K562 (cell line): ENCODE measurements at regions of chr11 and their contacts with region 1.

Region 1: DNA sequence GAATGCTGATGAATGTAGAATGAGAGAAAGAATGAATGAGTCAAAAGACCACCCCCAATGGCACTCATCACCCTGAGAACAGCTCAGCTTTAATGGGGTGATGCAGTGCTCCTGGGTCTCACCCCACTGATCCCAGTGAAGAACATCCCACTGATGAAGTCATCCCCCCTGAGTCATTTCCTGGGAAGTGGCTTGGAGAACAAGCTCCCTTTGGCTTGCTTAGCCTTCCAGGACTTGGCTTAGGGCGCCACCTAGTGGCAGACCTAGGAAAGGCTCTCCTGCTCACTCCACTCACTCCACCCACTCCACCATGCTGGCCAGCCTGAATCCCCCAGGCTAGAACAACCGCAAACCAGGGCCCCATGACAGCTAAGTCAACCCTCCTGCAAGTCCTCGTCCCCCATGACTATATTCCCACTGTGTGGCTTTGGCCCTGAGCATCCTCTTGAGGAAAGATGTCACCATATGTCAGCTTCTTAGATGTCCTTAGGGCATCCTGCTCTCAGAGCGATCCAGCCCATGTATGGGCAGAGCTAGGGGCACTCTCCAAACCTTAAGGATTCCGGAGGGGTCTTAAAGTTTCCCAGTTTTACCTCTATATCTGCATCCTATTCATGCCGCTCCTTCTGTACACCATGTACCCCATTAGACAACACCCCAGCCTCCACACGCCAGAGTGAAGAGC is 17.8 kb upstream of the TMPRSS13 start:
- DNase-seq: peak; percentile 83 to 92 (median 90)
- ATAC-seq: peak; percentile 94
- H3K4me3 ChIP-seq: no peak overlapping the region
- H3K27ac ChIP-seq: no peak overlapping the region
- H3K4me1 ChIP-seq: peaks cover 20 to 41% of the 10 kb centered on the region in 2 experiments
- H3K27me3 ChIP-seq: no peaks in the 10 kb centered on the region
- CTCF ChIP-seq: peak; percentile 90 to 97 (median 96)
- EP300 ChIP-seq: peak; percentile 42; the same call in 1 of the 2 replicates
- POLR2A ChIP-seq: no peak
- RAD21 ChIP-seq: peak; percentile 93 to 96

Region 2: DNA sequence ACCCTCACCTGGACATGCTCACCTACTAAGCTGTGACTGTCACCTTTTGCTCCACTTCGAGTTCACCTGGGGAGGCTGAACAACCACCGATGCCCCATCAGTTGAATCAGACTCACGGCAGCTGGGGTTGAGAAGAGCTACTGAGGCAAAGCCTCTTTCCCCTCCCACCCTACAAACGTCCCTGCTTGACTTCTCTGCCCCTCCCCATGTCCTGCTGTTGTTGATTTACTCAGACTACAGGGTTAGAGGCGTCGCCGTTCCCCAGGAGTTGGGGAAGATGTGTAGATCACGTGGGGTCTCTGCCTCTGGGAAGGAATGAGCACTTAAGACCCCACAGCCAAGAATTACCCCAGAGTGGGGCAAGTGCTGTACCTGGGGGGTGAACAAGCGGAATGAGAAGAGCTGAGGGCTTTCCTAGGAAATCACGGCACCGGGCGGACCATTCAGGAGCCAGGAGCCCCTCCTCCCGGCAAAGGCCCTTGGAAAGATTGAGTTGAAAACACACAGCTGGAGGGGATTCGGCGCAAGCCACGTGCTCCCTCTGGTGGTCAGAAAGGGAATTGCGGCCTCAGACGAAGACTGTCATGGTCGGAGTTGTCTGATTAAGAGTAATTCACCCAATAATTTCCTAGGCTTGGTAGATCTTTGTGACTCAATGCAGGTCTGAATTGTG is 129.5 kb before region 1 on chr11:
- CTCF ChIA-PET with region 1: interaction called, 37 read pairs
- POLR2A ChIA-PET with region 1: interaction called, 4 read pairs
- in situ Hi-C with region 1: loop called (anchors 5 kb)
- intact Hi-C with region 1: no loop called
- DNase-seq: peak; percentile 65 to 78 (median 76)
- ATAC-seq: peak; percentile 84
- H3K4me3 ChIP-seq: no peak overlapping the region
- H3K27ac ChIP-seq: no peak overlapping the region
- H3K4me1 ChIP-seq: peaks cover 0 to 30% of the 10 kb centered on the region in 2 experiments; a peak in 3 of 5 replicates
- H3K27me3 ChIP-seq: peaks cover 3 to 13% of the 10 kb centered on the region in 2 experiments; a peak in 3 of 5 replicates
- CTCF ChIP-seq: peak; percentile 86 to 99 (median 97)
- EP300 ChIP-seq: no peak
- POLR2A ChIP-seq: no peak
- RAD21 ChIP-seq: peak; percentile 75 to 88

Region 3: GRCh38 chr11:117891362-117891761 is 55.6 kb before region 1 on chr11:
- CTCF ChIA-PET with region 1: no interaction called
- POLR2A ChIA-PET with region 1: no interaction called
- in situ Hi-C with region 1: no loop called
- intact Hi-C with region 1: no loop called
- DNase-seq: no peak
- ATAC-seq: no peak; the same call in 2 of the 3 replicates
- H3K4me3 ChIP-seq: no peak overlapping the region
- H3K27ac ChIP-seq: no peak overlapping the region
- H3K4me1 ChIP-seq: no peaks in the 10 kb centered on the region
- H3K27me3 ChIP-seq: peaks cover 7 to 15% of the 10 kb centered on the region in 2 experiments; a peak in 2 of 5 replicates
- CTCF ChIP-seq: no peak
- EP300 ChIP-seq: no peak
- POLR2A ChIP-seq: no peak
- RAD21 ChIP-seq: no peak

Region 4: DNA sequence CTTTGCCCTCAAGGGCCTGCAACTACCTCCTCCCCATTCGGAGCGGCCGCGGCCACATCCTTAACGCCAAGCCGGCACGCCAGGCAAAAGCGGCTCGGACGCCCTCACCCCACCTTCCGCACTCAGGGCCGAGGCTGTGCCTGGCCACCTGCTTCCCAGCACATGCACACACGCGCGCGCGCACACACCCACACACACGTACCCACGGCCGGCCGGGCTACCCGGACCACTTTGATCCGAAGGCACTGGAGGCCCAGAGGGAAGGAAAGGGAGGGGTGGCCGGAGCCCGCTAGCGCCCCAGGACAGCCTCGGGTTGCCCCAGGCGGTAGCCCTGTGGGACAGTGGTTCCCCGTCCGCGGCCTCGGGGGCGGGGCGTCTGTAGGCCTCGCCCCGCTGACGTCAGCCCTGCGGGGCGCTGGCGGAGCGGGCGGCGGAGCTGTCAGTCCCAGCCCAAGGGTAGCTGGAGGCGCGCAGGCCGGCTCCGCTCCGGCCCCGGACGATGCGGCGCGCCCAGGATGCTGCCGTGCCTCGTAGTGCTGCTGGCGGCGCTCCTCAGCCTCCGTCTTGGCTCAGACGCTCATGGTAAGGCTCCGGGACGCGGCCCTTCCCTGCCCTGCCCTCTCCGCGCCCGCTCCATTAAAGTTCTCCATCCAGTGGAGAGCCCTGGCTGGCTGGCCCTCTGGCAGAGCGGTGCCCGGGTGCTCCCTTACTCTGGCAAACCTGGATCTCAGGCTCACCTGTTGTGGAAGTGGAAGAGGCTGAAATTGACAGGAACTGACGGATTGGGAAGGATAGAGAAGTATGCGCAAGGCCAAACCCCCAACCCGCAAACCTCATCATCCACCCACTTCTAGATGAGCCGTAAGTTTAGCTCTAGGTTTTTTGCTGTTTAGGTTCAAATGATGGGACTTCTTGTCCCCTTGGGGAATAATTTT is 39.2 kb after region 1 on chr11 and contains the start of gene IL10RA:
- CTCF ChIA-PET with region 1: no interaction called
- POLR2A ChIA-PET with region 1: no interaction called
- in situ Hi-C with region 1: no loop called
- intact Hi-C with region 1: loop called (anchors 5 kb)
- DNase-seq: peak; percentile 90 to 97 (median 96)
- ATAC-seq: peak; percentile 99
- H3K4me3 ChIP-seq: peak within 1 kb of the TSS; percentile 59
- H3K27ac ChIP-seq: peak within 1 kb of the TSS; percentile 75
- H3K4me1 ChIP-seq: peaks cover 12 to 15% of the 10 kb centered on the region in 2 experiments; a peak in 4 of 5 replicates
- H3K27me3 ChIP-seq: no peaks in the 10 kb centered on the region; a peak in 1 of 5 replicates
- CTCF ChIP-seq: peak in 2 of 3 experiments; percentile 11 to 15; a peak in 3 of 6 replicates
- EP300 ChIP-seq: no peak
- POLR2A ChIP-seq: peak; percentile 94
- RAD21 ChIP-seq: peak in 1 of 2 experiments; percentile 6; a peak in 1 of 4 replicates
- polyA plus RNA-seq, gene IL10RA: 0.17 to 0.48 TPM

Region 5: GRCh38 chr11:118058311-118059245 is 111.6 kb after region 1 on chr11:
- CTCF ChIA-PET with region 1: interaction called, 16 read pairs
- POLR2A ChIA-PET with region 1: interaction called, 3 read pairs
- in situ Hi-C with region 1: loop called (anchors 5 kb)
- intact Hi-C with region 1: loop called (anchors 1 kb)
- DNase-seq: no peak
- ATAC-seq: peak; percentile 23; the same call in 2 of the 3 replicates
- H3K4me3 ChIP-seq: no peak overlapping the region
- H3K27ac ChIP-seq: no peak overlapping the region
- H3K4me1 ChIP-seq: peaks cover 5 to 19% of the 10 kb centered on the region in 2 experiments
- H3K27me3 ChIP-seq: peaks cover 17 to 44% of the 10 kb centered on the region in 2 experiments; a peak in 4 of 5 replicates
- CTCF ChIP-seq: no peak
- EP300 ChIP-seq: no peak
- POLR2A ChIP-seq: no peak
- RAD21 ChIP-seq: no peak